Panc1 (cell line): ENCODE measurements at regions of chr12 and their contacts with region 1.

Region 1: DNA sequence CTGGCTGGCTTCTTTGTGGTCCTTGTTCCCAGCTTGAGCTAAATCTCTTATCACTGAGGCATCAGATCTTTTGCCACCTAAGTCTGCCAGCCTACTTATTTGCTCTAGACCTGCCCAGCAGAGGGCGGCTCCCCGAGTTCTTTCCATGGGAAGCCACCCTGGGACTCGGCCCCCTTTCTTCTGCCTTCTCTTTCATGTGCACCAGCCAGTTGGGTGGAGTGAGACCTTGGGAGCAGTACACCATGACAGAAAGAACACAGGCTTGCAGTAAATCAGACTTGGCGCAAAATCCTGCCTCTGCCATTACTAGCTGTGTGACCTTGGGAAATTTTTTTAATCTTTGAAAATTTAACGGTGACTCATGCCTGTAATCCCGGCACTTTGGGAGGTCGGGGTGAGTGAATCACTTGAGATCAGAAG is 7.4 kb downstream of the SMAGP start:
- DNase-seq: no peak
- ATAC-seq: peak; percentile 90
- H3K4me3 ChIP-seq: no peak overlapping the region
- H3K27ac ChIP-seq: no peak overlapping the region
- H3K4me1 ChIP-seq: no peaks in the 10 kb centered on the region
- H3K27me3 ChIP-seq: no peaks in the 10 kb centered on the region
- CTCF ChIP-seq: peak; percentile 81

Region 2: GRCh38 chr12:50986966-50987737 is 275.6 kb before region 1 on chr12:
- CTCF ChIA-PET with region 1: no interaction called
- POLR2A ChIA-PET with region 1: no interaction called
- in situ Hi-C with region 1: no loop called
- intact Hi-C with region 1: no loop called
- DNase-seq: peak; percentile 48
- ATAC-seq: peak; percentile 85
- H3K4me3 ChIP-seq: no peak overlapping the region
- H3K27ac ChIP-seq: no peak overlapping the region
- H3K4me1 ChIP-seq: no peaks in the 10 kb centered on the region
- H3K27me3 ChIP-seq: no peaks in the 10 kb centered on the region
- CTCF ChIP-seq: peak; percentile 79

Region 3: DNA sequence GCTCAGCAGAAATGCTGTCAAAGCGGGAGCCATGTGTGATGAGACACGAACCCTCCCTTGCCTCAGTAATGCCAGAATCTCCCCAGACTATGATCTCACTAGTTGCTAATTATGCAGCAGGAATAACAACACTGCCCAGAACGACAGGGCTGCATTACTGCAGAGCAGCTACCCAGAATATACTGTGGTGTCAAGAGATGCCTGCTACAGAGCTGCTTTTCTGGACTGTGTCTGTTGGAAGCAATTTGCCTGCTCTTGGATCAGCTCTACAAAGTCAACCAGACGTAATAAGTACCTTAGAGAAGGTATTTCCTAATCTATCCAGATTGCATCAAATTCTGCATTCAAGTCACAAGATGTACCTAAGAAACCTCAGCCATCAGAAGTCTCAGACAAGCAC is 184.8 kb before region 1 on chr12:
- CTCF ChIA-PET with region 1: no interaction called
- POLR2A ChIA-PET with region 1: interaction called, 15 read pairs
- in situ Hi-C with region 1: no loop called
- intact Hi-C with region 1: no loop called
- DNase-seq: no peak
- ATAC-seq: no peak
- H3K4me3 ChIP-seq: no peak overlapping the region
- H3K27ac ChIP-seq: no peak overlapping the region
- H3K4me1 ChIP-seq: peaks cover 9% of the 10 kb centered on the region
- H3K27me3 ChIP-seq: no peaks in the 10 kb centered on the region
- CTCF ChIP-seq: no peak

Region 4: DNA sequence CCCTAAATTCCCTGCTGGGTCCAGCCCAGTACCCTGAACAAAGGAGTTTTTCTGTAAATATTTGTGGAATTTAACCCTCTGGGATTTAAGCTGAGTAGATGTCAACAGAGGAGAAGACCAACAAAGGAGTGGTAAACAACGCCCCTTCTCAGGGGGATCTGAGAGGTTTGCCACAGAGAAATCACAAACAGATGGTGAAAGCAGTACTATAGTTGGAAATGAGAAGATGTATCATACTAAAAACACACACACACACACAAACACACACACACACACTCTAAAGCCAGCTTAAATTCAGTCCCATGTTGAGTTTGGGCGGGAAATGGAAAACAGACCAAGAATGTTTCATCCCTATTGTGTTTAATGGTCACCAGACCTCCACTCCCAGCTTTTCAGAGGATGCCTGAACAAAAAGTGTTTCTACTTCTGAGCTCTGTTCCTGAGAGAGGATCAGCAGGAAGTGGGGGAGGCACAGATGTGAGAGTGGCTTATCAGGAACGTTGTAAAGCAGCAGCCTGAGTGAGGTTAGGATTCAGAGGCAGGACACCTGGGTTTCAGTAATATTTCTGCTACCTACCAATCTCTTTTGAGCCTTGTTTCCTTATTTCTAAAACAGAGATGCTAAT is 58.0 kb after region 1 on chr12:
- CTCF ChIA-PET with region 1: interaction called, 11 read pairs
- POLR2A ChIA-PET with region 1: no interaction called
- in situ Hi-C with region 1: no loop called
- intact Hi-C with region 1: no loop called
- DNase-seq: no peak
- ATAC-seq: no peak
- H3K4me3 ChIP-seq: no peak overlapping the region
- H3K27ac ChIP-seq: no peak overlapping the region
- H3K4me1 ChIP-seq: no peaks in the 10 kb centered on the region
- H3K27me3 ChIP-seq: no peaks in the 10 kb centered on the region
- CTCF ChIP-seq: no peak

Region 5: GRCh38 chr12:51341259-51342007 is 78.7 kb after region 1 on chr12:
- CTCF ChIA-PET with region 1: interaction called, 11 read pairs
- POLR2A ChIA-PET with region 1: no interaction called
- in situ Hi-C with region 1: no loop called
- intact Hi-C with region 1: loop called (anchors 5 kb)
- DNase-seq: peak; percentile 85
- ATAC-seq: peak; percentile 89
- H3K4me3 ChIP-seq: peak overlapping the region in 1 of 2 experiments; percentile 21; a peak in 1 of 4 replicates
- H3K27ac ChIP-seq: no peak overlapping the region
- H3K4me1 ChIP-seq: no peaks in the 10 kb centered on the region
- H3K27me3 ChIP-seq: no peaks in the 10 kb centered on the region
- CTCF ChIP-seq: peak; percentile 98